ENCODE measurements at regions of chr3 and their contacts with region 1.

Region 1: GRCh38 chr3:39180546-39181346 is 11.6 kb downstream of the XIRP1 start:
- DNase-seq: peak; percentile 90 to 96 (median 92)
- H3K4me3 ChIP-seq: peak overlapping the region in 2 of 4 donors; percentile 8 to 44
- H3K27ac ChIP-seq: peak overlapping the region in 4 of 5 donors; percentile 22 to 83 (median 56)
- H3K4me1 ChIP-seq: peaks cover 8 to 33% of the 10 kb centered on the region in 2 donors
- H3K27me3 ChIP-seq: no peaks in the 10 kb centered on the region
- CTCF ChIP-seq: peak in 3 of 6 experiments; percentile 28 to 52 (median 34)
- POLR2A ChIP-seq: peak; percentile 32 to 34

Region 2: GRCh38 chr3:39000008-39000450 is 180.7 kb before region 1 on chr3:
- intact Hi-C with region 1: no loop called
- DNase-seq: no peak
- H3K4me3 ChIP-seq: no peak overlapping the region
- H3K27ac ChIP-seq: no peak overlapping the region
- H3K4me1 ChIP-seq: no peaks in the 10 kb centered on the region
- H3K27me3 ChIP-seq: no peaks in the 10 kb centered on the region
- CTCF ChIP-seq: peak; percentile 57 to 84 (median 67)
- POLR2A ChIP-seq: no peak

Region 3: DNA sequence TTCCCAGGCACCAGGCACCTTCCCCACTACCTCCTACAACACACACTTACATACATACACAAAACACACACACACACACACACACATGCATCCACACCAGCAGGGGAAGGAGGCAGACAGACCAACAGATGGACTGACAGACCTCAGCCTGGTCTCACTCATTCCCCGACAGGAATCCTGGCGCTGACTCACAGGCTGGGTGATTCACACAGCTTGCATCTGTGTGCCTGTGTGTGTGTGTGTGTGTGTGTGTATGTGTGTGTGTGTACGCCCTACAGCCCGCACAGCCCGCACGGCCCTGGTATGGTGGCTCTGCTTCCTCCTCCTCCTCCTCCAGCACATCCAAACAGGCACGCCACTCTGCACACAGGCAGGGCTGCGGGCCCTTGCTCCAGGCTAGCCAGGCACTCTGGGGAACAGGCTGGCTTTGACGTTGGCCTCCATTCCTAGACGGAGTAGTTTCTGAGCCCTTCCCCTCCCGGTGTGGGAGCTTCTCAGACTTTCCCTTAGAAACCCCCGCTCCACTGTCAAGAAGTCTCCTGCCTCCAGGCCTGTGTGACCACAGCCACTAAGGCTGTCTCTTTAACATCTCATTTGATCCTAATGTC is 33.7 kb before region 1 on chr3:
- intact Hi-C with region 1: loop called in 1 of 2 experiments (anchors 5 kb)
- DNase-seq: peak; percentile 86 to 95 (median 94)
- H3K4me3 ChIP-seq: peak overlapping the region in 1 of 4 donors; percentile 17
- H3K27ac ChIP-seq: peak overlapping the region; percentile 10 to 100 (median 80)
- H3K4me1 ChIP-seq: peaks cover 66 to 79% of the 10 kb centered on the region in 2 donors
- H3K27me3 ChIP-seq: no peaks in the 10 kb centered on the region
- CTCF ChIP-seq: peak in 1 of 6 experiments; percentile 3
- POLR2A ChIP-seq: peak; percentile 41 to 73

Region 4: DNA sequence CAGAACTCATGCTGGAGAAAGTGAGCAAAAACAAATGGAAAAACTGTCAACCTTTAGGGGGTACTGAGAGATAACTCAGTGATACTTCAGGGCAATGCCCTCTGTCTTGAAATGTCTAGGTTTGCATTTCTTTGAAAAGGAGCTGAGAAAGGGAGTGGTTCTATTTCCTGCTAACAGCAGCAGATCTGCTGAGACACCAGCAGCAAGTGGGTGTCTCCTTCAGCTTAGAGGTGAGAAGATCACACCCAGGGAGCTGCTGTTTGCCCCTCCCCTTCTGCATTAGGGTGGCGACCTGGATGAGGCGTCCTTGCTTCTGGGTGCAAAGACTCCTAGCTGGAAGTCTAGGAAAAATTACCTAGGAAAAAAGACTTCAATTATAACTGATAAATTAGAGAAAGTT is 54.0 kb after region 1 on chr3:
- intact Hi-C with region 1: no loop called
- DNase-seq: no peak
- H3K4me3 ChIP-seq: no peak overlapping the region
- H3K27ac ChIP-seq: no peak overlapping the region
- H3K4me1 ChIP-seq: no peaks in the 10 kb centered on the region
- H3K27me3 ChIP-seq: peaks cover 16% of the 10 kb centered on the region
- CTCF ChIP-seq: no peak
- POLR2A ChIP-seq: no peak

Region 5: DNA sequence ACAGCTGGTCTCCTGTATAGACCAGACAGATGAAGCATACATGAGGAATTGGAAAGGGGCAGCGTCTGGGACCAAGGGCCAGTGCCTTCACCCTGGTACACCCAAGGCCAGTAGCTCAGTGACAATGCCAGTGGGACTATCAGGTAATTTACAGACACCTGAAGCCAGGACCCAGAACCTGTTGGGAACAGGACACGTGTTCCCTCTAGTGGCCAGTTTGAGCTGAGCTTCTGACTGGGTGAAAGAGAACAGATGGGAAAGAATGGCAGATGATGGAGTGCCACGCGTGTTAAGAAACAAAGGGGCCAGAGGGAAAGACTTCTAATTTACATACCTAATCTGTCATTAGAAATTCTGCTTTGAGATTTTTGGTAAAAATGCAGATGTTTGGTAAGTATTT is 197.3 kb after region 1 on chr3:
- intact Hi-C with region 1: loop called (anchors 10 kb)
- DNase-seq: peak; percentile 33 to 80 (median 51)
- H3K4me3 ChIP-seq: no peak overlapping the region
- H3K27ac ChIP-seq: no peak overlapping the region
- H3K4me1 ChIP-seq: peaks cover 0 to 6% of the 10 kb centered on the region in 2 donors
- H3K27me3 ChIP-seq: no peaks in the 10 kb centered on the region
- CTCF ChIP-seq: peak; percentile 46 to 71 (median 59)
- POLR2A ChIP-seq: no peak

Region 6: DNA sequence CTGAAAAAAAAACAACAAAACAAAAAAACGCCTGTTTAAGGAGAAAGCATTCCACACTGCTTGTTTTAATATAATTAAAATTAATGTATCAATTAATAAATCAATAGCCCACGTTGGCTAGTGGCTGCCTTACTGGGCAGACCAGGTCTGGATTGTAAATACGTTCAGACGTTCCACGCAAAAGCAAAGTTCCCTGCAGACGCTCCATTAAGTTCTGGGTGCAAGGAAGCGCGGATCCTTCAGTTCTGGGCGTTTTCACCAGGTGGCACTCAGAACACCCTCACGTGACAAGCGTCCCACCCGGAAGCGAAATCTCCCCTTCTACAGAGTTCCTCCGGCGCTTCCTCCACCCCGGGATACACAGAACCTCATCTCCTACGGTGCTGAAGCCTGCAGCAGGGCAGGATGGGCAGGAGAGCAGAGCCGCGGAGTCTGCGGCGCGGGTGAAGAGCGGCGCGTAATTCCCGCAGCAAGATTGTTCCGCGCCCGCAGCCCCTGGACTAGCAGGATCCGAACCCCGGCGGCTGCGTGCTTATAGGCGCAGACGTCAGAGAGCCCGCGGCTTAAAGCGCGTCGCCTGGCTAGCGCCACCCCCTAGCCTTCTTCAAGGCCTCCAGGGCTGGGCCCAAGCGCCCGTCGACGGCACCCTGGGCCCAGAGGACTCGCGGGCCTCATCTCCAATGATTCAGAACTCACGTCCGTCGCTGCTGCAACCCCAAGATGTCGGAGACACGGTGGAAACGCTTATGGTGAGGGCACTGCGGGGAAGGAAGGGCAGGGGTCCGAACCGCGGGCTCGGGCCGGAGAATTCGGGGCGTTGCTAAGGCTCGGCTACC is 202.5 kb after region 1 on chr3 and contains the start of gene SLC25A38:
- intact Hi-C with region 1: loop called (anchors 10 kb)
- DNase-seq: peak; percentile 75 to 90 (median 82)
- H3K4me3 ChIP-seq: peak within 1 kb of the TSS in 3 of 4 donors; percentile 30 to 74 (median 58)
- H3K27ac ChIP-seq: peak within 1 kb of the TSS; percentile 79 to 98 (median 97)
- H3K4me1 ChIP-seq: peaks cover 14 to 24% of the 10 kb centered on the region in 2 donors
- H3K27me3 ChIP-seq: no peaks in the 10 kb centered on the region
- CTCF ChIP-seq: peak in 5 of 6 experiments; percentile 16 to 49 (median 39)
- POLR2A ChIP-seq: peak; percentile 24 to 64
- total RNA-seq, gene SLC25A38: 34.2 to 67.2 (median 47.3) TPM

Region 7: DNA sequence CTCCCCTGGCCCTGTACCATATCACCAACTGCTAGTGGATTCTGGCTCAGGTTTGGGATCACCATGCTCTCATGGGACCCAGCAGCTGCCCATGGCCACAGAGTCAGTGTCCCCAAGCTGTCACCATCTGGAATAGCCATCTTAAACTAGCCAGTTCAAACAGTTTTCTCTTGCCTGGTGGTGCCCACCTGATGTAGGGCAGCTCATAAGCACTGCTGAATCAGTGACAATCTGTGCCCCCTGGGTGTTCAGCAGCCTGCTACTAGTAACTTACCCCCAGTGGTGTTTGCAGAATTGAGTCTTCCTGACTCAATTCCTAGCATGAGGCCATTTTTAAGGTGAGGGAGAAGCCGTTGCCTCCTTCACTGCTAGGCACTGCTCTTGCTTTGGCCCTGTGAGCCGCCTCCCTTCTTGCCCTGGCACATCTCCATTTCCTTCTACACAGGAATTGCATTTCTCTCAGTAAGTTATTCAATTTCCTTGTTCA is 233.7 kb after region 1 on chr3:
- intact Hi-C with region 1: no loop called
- DNase-seq: no peak
- H3K4me3 ChIP-seq: no peak overlapping the region
- H3K27ac ChIP-seq: no peak overlapping the region
- H3K4me1 ChIP-seq: peaks cover 0 to 3% of the 10 kb centered on the region in 2 donors
- H3K27me3 ChIP-seq: no peaks in the 10 kb centered on the region
- CTCF ChIP-seq: no peak
- POLR2A ChIP-seq: no peak